ENCODE measurements at regions of chr3 and their contacts with region 1.

Region 1: DNA sequence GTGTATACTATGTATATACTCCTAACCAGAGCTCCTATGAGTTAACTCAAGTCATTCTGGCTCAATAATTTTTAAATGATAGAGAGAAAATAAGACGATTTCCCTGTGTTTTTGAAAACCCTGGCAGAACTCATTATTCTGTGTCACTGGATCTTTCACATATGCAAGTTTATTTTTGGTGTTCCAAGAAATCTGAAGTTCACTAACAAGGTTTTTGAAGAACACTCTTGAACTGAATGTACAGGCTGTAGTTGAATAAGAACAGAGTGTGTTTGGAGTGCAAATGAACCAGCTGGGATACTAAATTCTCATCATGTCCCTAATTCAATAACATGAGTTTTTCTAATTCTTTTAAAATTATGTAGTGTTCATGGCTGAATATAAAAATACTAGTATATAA is 466.9 kb upstream of the SUCLG2 start:
- DNase-seq: no peak
- H3K4me3 Mint-ChIP-seq: no peak overlapping the region
- H3K27ac Mint-ChIP-seq: no peak overlapping the region
- H3K4me1 Mint-ChIP-seq: peaks cover 6% of the 10 kb centered on the region
- H3K27me3 Mint-ChIP-seq: no peaks in the 10 kb centered on the region

Region 2: GRCh38 chr3:68025189-68025588 is 96.1 kb before region 1 on chr3:
- CTCF ChIA-PET with region 1: no interaction called
- POLR2A ChIA-PET with region 1: no interaction called
- intact Hi-C with region 1: no loop called
- DNase-seq: no peak
- H3K4me3 Mint-ChIP-seq: no peak overlapping the region
- H3K27ac Mint-ChIP-seq: no peak overlapping the region
- H3K4me1 Mint-ChIP-seq: peaks cover 4% of the 10 kb centered on the region
- H3K27me3 Mint-ChIP-seq: no peaks in the 10 kb centered on the region

Region 3: DNA sequence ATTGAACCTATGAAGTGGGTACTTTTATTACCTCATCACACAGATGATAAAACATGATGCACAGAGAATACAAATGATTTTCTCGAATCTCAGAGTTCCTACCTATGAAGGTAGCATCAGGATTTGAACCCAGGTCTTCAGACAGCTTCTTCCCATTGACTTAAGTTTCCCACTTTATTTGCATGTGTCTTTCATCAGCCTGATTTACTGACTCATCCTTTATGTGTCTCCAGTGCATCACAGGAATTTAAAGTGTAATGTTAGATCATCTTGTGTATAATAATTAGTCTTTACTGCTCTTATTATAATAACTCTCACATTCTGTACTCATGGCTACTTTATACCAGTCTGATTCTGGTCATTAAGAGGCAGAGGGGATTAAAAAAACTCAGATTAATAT is 17.5 kb before region 1 on chr3:
- CTCF ChIA-PET with region 1: no interaction called
- POLR2A ChIA-PET with region 1: no interaction called
- intact Hi-C with region 1: loop called (anchors 2 kb)
- DNase-seq: no peak
- H3K4me3 Mint-ChIP-seq: no peak overlapping the region
- H3K27ac Mint-ChIP-seq: no peak overlapping the region
- H3K4me1 Mint-ChIP-seq: peaks cover 17% of the 10 kb centered on the region
- H3K27me3 Mint-ChIP-seq: no peaks in the 10 kb centered on the region

Measured in activated CD4-positive, alpha-beta memory T cell treated with anti-CD3 and anti-CD28 coated beads for 36 hours (primary cell).